Activated CD4-positive, alpha-beta T cell treated with anti-CD3 and anti-CD28 coated beads, Interleukin-2, amount 10 ng/mL, durations not matched to agents 24 days and 14 days (primary cell): ENCODE measurements at regions of chr5 and their contacts with region 1.

Region 1: DNA sequence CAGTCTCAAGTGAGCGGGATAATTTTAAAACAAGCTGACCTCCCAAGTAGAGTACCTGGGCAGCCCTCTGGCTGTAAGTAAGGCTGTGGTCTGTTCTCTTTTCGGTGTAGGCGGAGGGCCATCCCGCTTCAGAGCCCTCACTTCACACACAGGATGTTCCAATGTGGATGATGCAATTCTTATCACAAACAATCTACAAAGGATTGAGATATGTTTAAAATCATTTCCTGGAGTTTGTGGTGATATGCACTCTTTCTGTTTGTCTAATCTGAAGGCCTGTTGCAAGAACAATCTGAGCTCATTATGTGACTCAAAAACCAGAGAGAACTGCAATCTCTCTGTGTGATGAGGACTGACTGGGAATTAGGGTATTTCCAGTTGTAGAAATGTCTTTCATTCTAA is 42.5 kb downstream of the ITGA2 start:
- DNase-seq: peak; percentile 86
- H3K4me3 Mint-ChIP-seq: peak overlapping the region; percentile 53
- H3K27ac Mint-ChIP-seq: peak overlapping the region; percentile 80
- H3K4me1 Mint-ChIP-seq: peaks cover 57% of the 10 kb centered on the region
- H3K27me3 Mint-ChIP-seq: no peaks in the 10 kb centered on the region

Region 2: GRCh38 chr5:52725065-52725746 is 306.5 kb before region 1 on chr5:
- intact Hi-C with region 1: loop called (anchors 5 kb)
- DNase-seq: peak; percentile 93
- H3K4me3 Mint-ChIP-seq: peak overlapping the region; percentile 69
- H3K27ac Mint-ChIP-seq: peak overlapping the region; percentile 90
- H3K4me1 Mint-ChIP-seq: peaks cover 50% of the 10 kb centered on the region
- H3K27me3 Mint-ChIP-seq: no peaks in the 10 kb centered on the region